T-cell (primary cell): ENCODE measurements at regions of chr19 and their contacts with region 1.

Region 1: GRCh38 chr19:40750059-40750873 is at the start of gene ACTMAP:
- DNase-seq: peak; percentile 98 to 100 (median 99)
- ATAC-seq: peak; percentile 89 to 91 (median 89)
- H3K4me3 ChIP-seq: peak within 1 kb of the TSS; percentile 91 to 92
- H3K4me3 Mint-ChIP-seq: peak within 1 kb of the TSS; percentile 91 to 100 (median 97)
- H3K27ac ChIP-seq: peak within 1 kb of the TSS; percentile 83
- H3K27ac Mint-ChIP-seq: peak within 1 kb of the TSS; percentile 98 to 99
- H3K4me1 ChIP-seq: peaks cover 8 to 53% of the 10 kb centered on the region in 2 experiments
- H3K4me1 Mint-ChIP-seq: peaks cover 35 to 46% (median 43%) of the 10 kb centered on the region in 3 donors
- H3K27me3 ChIP-seq: no peaks in the 10 kb centered on the region
- H3K27me3 Mint-ChIP-seq: no peaks in the 10 kb centered on the region
- total RNA-seq, gene ACTMAP: 4.7 to 8.3 (median 6.8) TPM

Region 2: DNA sequence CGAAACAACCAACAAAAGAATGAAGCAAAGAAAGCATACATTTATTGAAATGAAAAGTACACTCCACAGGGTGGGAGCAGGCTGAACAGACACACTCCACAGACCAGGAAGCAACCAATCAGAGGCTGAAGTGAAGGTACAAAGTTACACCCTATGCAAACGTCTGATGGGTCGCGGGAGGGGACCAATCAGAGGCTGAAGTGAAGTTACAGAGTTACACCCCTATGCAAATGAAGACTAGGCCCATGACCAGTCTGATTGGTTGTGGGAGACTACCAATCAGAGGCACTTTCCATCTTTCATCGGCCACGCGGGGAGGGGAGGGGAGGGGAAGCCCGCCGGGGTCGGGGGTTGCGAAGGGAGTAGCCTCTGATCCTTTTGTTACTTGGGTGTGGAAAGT is 891.7 kb before region 1 on chr19:
- CTCF ChIA-PET with region 1: no interaction called
- POLR2A ChIA-PET with region 1: interaction called in 1 of 2 experiments, 17 read pairs
- DNase-seq: peak in 5 of 35 experiments; percentile 52 to 73 (median 63)
- ATAC-seq: no peak
- H3K4me3 ChIP-seq: peak overlapping the region in 1 of 2 donors; percentile 25
- H3K4me3 Mint-ChIP-seq: no peak overlapping the region
- H3K27ac ChIP-seq: peak overlapping the region; percentile 44
- H3K27ac Mint-ChIP-seq: peak overlapping the region in 1 of 2 donors; percentile 12
- H3K4me1 ChIP-seq: no peaks in the 10 kb centered on the region
- H3K4me1 Mint-ChIP-seq: no peaks in the 10 kb centered on the region
- H3K27me3 ChIP-seq: peaks cover 0 to 2% of the 10 kb centered on the region in 2 experiments
- H3K27me3 Mint-ChIP-seq: peaks cover 2 to 6% of the 10 kb centered on the region in 2 donors

Region 3: GRCh38 chr19:40633207-40633606 is 117.1 kb before region 1 on chr19:
- CTCF ChIA-PET with region 1: no interaction called
- POLR2A ChIA-PET with region 1: no interaction called
- DNase-seq: no peak
- ATAC-seq: no peak
- H3K4me3 ChIP-seq: no peak overlapping the region
- H3K4me3 Mint-ChIP-seq: no peak overlapping the region
- H3K27ac ChIP-seq: no peak overlapping the region
- H3K27ac Mint-ChIP-seq: no peak overlapping the region
- H3K4me1 ChIP-seq: peaks cover 0 to 12% of the 10 kb centered on the region in 2 experiments
- H3K4me1 Mint-ChIP-seq: peaks cover 7 to 25% (median 9%) of the 10 kb centered on the region in 3 donors
- H3K27me3 ChIP-seq: peaks cover 0 to 14% of the 10 kb centered on the region in 2 experiments
- H3K27me3 Mint-ChIP-seq: peaks cover 0 to 3% of the 10 kb centered on the region in 2 donors

Region 4: DNA sequence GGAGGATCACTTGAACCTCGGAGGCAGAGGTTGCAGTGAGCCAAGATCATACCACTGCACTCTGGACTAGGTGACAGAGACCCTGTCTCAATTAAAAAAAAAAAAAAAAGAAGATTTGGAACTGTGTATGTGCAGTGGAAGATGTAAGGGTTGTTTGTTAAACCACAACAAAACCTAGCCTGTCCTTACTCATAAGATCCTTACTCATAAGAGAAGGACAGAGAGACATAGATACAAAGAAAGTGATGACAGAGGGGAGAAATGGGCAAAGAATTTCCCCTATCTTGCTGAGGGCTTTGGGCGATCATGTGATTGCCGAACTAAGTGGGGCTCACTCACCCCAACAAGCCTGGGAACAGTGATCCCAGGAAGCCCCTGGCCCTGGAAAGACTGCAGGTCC is 25.4 kb before region 1 on chr19:
- CTCF ChIA-PET with region 1: no interaction called
- POLR2A ChIA-PET with region 1: no interaction called
- DNase-seq: no peak
- ATAC-seq: no peak
- H3K4me3 ChIP-seq: no peak overlapping the region
- H3K4me3 Mint-ChIP-seq: no peak overlapping the region
- H3K27ac ChIP-seq: no peak overlapping the region
- H3K27ac Mint-ChIP-seq: no peak overlapping the region
- H3K4me1 ChIP-seq: peaks cover 0 to 18% of the 10 kb centered on the region in 2 experiments
- H3K4me1 Mint-ChIP-seq: peaks cover 23 to 39% (median 33%) of the 10 kb centered on the region in 3 donors
- H3K27me3 ChIP-seq: no peaks in the 10 kb centered on the region
- H3K27me3 Mint-ChIP-seq: no peaks in the 10 kb centered on the region

Region 5: GRCh38 chr19:40798223-40798996 is 48.1 kb after region 1 on chr19:
- CTCF ChIA-PET with region 1: interaction called in 1 of 2 experiments, 13 read pairs
- POLR2A ChIA-PET with region 1: interaction called in 1 of 2 experiments, 5 read pairs
- DNase-seq: peak; percentile 100
- ATAC-seq: peak; percentile 25 to 84 (median 78)
- H3K4me3 ChIP-seq: peak overlapping the region; percentile 86 to 87
- H3K4me3 Mint-ChIP-seq: peak overlapping the region; percentile 92 to 94 (median 93)
- H3K27ac ChIP-seq: peak overlapping the region; percentile 99
- H3K27ac Mint-ChIP-seq: peak overlapping the region; percentile 98 to 99
- H3K4me1 ChIP-seq: peaks cover 30 to 49% of the 10 kb centered on the region in 2 experiments
- H3K4me1 Mint-ChIP-seq: peaks cover 46 to 52% (median 50%) of the 10 kb centered on the region in 3 donors
- H3K27me3 ChIP-seq: no peaks in the 10 kb centered on the region
- H3K27me3 Mint-ChIP-seq: no peaks in the 10 kb centered on the region

Region 6: DNA sequence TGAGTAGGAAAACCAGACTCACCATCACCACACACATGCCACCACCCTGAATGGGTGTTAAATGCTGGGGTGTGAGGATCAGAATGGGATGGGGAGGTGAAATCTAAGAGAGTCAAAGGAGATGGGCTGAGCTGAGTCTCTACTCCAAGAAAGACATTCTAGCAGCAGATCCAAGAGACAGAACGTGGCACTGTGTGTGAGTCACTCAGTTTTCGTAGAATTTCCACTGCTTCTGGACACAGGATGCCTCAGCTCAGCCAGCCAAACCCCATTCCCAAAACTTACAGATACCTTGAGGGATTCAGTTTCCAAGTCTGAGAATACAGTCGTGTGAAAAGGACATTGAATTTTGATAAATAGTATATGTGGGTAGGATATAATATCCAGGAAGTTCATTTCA is 139.1 kb after region 1 on chr19:
- CTCF ChIA-PET with region 1: no interaction called
- POLR2A ChIA-PET with region 1: interaction called in 1 of 2 experiments, 15 read pairs
- DNase-seq: no peak
- ATAC-seq: no peak
- H3K4me3 ChIP-seq: no peak overlapping the region
- H3K4me3 Mint-ChIP-seq: no peak overlapping the region
- H3K27ac ChIP-seq: no peak overlapping the region
- H3K27ac Mint-ChIP-seq: no peak overlapping the region
- H3K4me1 ChIP-seq: no peaks in the 10 kb centered on the region
- H3K4me1 Mint-ChIP-seq: no peaks in the 10 kb centered on the region
- H3K27me3 ChIP-seq: peaks cover 0 to 20% of the 10 kb centered on the region in 2 experiments
- H3K27me3 Mint-ChIP-seq: peaks cover 24 to 27% of the 10 kb centered on the region in 2 donors